ENCODE measurements at regions of chr9 and their contacts with region 1.

Region 1: GRCh38 chr9:6907772-6908381 is 150.1 kb downstream of the KDM4C start:
- DNase-seq: peak; percentile 55
- ATAC-seq: peak; percentile 71
- H3K4me3 ChIP-seq: no peak overlapping the region
- H3K27ac ChIP-seq: no peak overlapping the region
- H3K4me1 ChIP-seq: no peaks in the 10 kb centered on the region
- H3K27me3 ChIP-seq: no peaks in the 10 kb centered on the region
- CTCF ChIP-seq: peak; percentile 82
- POLR2A ChIP-seq: no peak
- RAD21 ChIP-seq: peak; percentile 85

Region 2: DNA sequence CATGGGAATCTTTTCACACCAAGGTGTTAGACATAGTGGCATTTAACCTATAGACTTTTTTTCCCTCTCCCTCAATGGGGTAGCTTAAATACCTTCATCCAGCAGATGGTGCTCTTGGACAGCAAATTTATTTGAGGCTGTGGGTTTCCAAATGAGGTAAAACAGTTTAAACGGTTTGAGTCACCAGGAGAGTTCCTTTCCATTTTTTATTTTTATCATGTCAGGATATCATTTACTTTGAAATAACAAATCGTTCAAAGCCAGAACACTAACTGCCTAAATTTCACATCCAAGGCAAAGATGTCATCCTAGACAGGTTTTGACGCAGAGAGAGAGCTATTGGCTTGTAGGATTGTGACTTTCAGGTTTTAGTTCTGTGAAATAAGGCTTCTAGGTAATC is 80.4 kb before region 1 on chr9:
- CTCF ChIA-PET with region 1: no interaction called
- POLR2A ChIA-PET with region 1: no interaction called
- dilution Hi-C with region 1: no loop called
- in situ Hi-C with region 1: no loop called
- intact Hi-C with region 1: loop called (anchors 2 kb)
- DNase-seq: peak; percentile 54
- ATAC-seq: peak; percentile 86
- H3K4me3 ChIP-seq: no peak overlapping the region
- H3K27ac ChIP-seq: no peak overlapping the region
- H3K4me1 ChIP-seq: no peaks in the 10 kb centered on the region
- H3K27me3 ChIP-seq: no peaks in the 10 kb centered on the region
- CTCF ChIP-seq: peak; percentile 76
- POLR2A ChIP-seq: no peak
- RAD21 ChIP-seq: peak; percentile 74

Region 3: GRCh38 chr9:6842584-6842947 is 65.3 kb before region 1 on chr9:
- CTCF ChIA-PET with region 1: no interaction called
- POLR2A ChIA-PET with region 1: no interaction called
- dilution Hi-C with region 1: no loop called
- in situ Hi-C with region 1: no loop called
- intact Hi-C with region 1: no loop called
- DNase-seq: peak; percentile 36
- ATAC-seq: no peak
- H3K4me3 ChIP-seq: no peak overlapping the region
- H3K27ac ChIP-seq: no peak overlapping the region
- H3K4me1 ChIP-seq: no peaks in the 10 kb centered on the region
- H3K27me3 ChIP-seq: no peaks in the 10 kb centered on the region
- CTCF ChIP-seq: no peak
- POLR2A ChIP-seq: no peak
- RAD21 ChIP-seq: no peak

Region 4: GRCh38 chr9:6961845-6962522 is 54.1 kb after region 1 on chr9:
- CTCF ChIA-PET with region 1: no interaction called
- POLR2A ChIA-PET with region 1: no interaction called
- dilution Hi-C with region 1: no loop called
- in situ Hi-C with region 1: no loop called
- intact Hi-C with region 1: no loop called
- DNase-seq: no peak
- ATAC-seq: no peak
- H3K4me3 ChIP-seq: no peak overlapping the region
- H3K27ac ChIP-seq: no peak overlapping the region
- H3K4me1 ChIP-seq: no peaks in the 10 kb centered on the region
- H3K27me3 ChIP-seq: no peaks in the 10 kb centered on the region
- CTCF ChIP-seq: no peak
- POLR2A ChIP-seq: no peak
- RAD21 ChIP-seq: no peak

Region 5: DNA sequence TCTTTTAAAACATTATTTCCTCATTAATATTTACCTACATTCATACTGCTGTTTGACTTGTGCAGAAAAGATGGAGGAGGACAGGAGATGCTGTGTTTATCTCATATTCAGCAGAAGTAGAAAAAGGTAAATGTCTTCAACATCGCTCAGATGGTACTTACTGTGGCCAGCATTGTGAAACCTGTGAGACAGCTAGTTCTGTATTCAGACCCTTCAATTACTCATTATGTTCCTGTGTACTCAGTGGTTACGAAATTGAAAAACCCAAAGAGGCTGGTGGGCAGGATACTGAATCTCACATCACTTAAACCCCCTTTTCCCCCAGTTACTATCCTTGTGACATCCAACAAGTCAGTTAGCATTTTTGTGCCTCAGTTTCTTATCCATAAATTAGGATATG is 65.9 kb after region 1 on chr9:
- CTCF ChIA-PET with region 1: no interaction called
- POLR2A ChIA-PET with region 1: no interaction called
- dilution Hi-C with region 1: no loop called
- in situ Hi-C with region 1: no loop called
- intact Hi-C with region 1: loop called (anchors 5 kb)
- DNase-seq: peak; percentile 7
- ATAC-seq: no peak
- H3K4me3 ChIP-seq: no peak overlapping the region
- H3K27ac ChIP-seq: no peak overlapping the region
- H3K4me1 ChIP-seq: 0 out of 2 replicates have a peak, but pooled peaks cover 2% of the 10 kb centered on the region
- H3K27me3 ChIP-seq: no peaks in the 10 kb centered on the region
- CTCF ChIP-seq: no peak
- POLR2A ChIP-seq: no peak
- RAD21 ChIP-seq: no peak

Region 6: GRCh38 chr9:7045361-7045760 is 137.5 kb after region 1 on chr9:
- CTCF ChIA-PET with region 1: interaction called, 3 read pairs
- POLR2A ChIA-PET with region 1: no interaction called
- dilution Hi-C with region 1: no loop called
- in situ Hi-C with region 1: loop called (anchors 10 kb)
- intact Hi-C with region 1: no loop called
- DNase-seq: peak; percentile 34
- ATAC-seq: peak; percentile 64
- H3K4me3 ChIP-seq: no peak overlapping the region
- H3K27ac ChIP-seq: no peak overlapping the region
- H3K4me1 ChIP-seq: no peaks in the 10 kb centered on the region
- H3K27me3 ChIP-seq: no peaks in the 10 kb centered on the region
- CTCF ChIP-seq: no peak
- POLR2A ChIP-seq: no peak
- RAD21 ChIP-seq: no peak

Region 7: DNA sequence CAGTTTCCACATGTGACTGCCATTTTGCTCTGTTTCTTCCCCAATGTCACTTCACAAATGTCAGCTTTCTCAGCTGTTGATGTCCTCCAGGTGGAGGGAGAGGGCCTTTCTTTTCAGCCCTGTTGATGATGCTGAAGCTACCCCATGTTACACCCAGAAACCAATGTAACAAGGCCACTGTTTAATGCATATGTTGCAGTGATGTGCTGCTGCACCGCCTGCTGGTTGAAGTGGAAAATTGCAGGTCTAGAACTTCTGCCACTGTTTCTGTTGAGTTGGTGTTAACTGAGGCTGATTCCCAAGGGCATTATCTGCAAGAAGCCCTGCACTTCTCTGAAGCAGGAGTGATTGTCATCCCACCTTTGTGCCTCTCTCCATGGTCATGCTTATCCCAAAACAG is 278.3 kb after region 1 on chr9:
- CTCF ChIA-PET with region 1: no interaction called
- POLR2A ChIA-PET with region 1: no interaction called
- dilution Hi-C with region 1: no loop called
- in situ Hi-C with region 1: no loop called
- intact Hi-C with region 1: loop called (anchors 5 kb)
- DNase-seq: peak; percentile 37
- ATAC-seq: peak; percentile 63
- H3K4me3 ChIP-seq: no peak overlapping the region
- H3K27ac ChIP-seq: no peak overlapping the region
- H3K4me1 ChIP-seq: peaks cover 2% of the 10 kb centered on the region; the same call in 1 of the 2 replicates
- H3K27me3 ChIP-seq: no peaks in the 10 kb centered on the region
- CTCF ChIP-seq: peak; percentile 54
- POLR2A ChIP-seq: no peak
- RAD21 ChIP-seq: peak; percentile 54

Region 8: GRCh38 chr9:7259544-7260241 is 351.8 kb after region 1 on chr9:
- CTCF ChIA-PET with region 1: no interaction called
- POLR2A ChIA-PET with region 1: no interaction called
- dilution Hi-C with region 1: no loop called
- in situ Hi-C with region 1: no loop called
- intact Hi-C with region 1: loop called (anchors 10 kb)
- DNase-seq: no peak
- ATAC-seq: no peak
- H3K4me3 ChIP-seq: no peak overlapping the region
- H3K27ac ChIP-seq: no peak overlapping the region
- H3K4me1 ChIP-seq: no peaks in the 10 kb centered on the region
- H3K27me3 ChIP-seq: no peaks in the 10 kb centered on the region; the same call in 1 of the 2 replicates
- CTCF ChIP-seq: no peak
- POLR2A ChIP-seq: no peak
- RAD21 ChIP-seq: no peak

Region 9: DNA sequence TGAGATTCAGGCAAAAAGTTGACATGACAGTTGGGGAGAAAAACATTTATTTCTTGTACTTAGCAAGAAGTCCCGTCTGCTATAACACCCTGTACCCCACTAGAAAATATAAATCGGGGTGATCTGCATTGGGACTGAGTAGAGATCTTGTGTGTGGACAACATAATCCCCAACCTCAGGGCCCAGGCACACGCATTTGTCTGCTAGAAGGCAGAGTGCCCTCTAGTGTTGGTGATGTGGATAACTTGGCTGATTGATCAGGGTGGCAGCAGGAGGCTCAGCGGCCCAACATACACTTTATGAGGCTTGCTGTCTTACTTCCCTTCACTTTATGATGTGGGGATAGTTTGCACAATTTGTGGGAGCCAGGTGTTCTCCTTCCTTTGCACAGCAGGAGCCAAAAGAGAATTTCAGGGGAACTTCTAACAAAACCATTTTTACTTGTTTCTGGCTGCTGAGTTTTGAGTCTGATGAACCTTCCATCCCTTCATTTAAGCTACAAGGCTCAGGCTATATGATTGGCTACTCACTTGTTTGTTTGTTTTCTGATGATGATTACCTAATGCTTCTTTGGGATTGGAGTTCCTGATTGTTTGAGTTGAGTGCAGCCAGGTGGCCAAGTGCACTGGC is 628.5 kb after region 1 on chr9:
- CTCF ChIA-PET with region 1: no interaction called
- POLR2A ChIA-PET with region 1: no interaction called
- dilution Hi-C with region 1: no loop called
- in situ Hi-C with region 1: loop called (anchors 10 kb)
- intact Hi-C with region 1: loop called (anchors 2 kb)
- DNase-seq: peak; percentile 56
- ATAC-seq: peak; percentile 94
- H3K4me3 ChIP-seq: no peak overlapping the region
- H3K27ac ChIP-seq: no peak overlapping the region
- H3K4me1 ChIP-seq: no peaks in the 10 kb centered on the region
- H3K27me3 ChIP-seq: no peaks in the 10 kb centered on the region; the same call in 1 of the 2 replicates
- CTCF ChIP-seq: peak; percentile 53
- POLR2A ChIP-seq: no peak
- RAD21 ChIP-seq: peak; percentile 61